ENCODE measurements at regions of chr6 and their contacts with region 1.

Region 1: GRCh38 chr6:13026557-13026956 is 301.8 kb downstream of the TBC1D7 start:
- DNase-seq: no peak
- H3K4me3 Mint-ChIP-seq: no peak overlapping the region
- H3K27ac Mint-ChIP-seq: no peak overlapping the region
- H3K4me1 Mint-ChIP-seq: no peaks in the 10 kb centered on the region
- H3K27me3 Mint-ChIP-seq: peaks cover 7% of the 10 kb centered on the region

Region 2: GRCh38 chr6:13009461-13009860 is 17.1 kb before region 1 on chr6:
- CTCF ChIA-PET with region 1: no interaction called
- POLR2A ChIA-PET with region 1: no interaction called
- intact Hi-C with region 1: loop called (anchors 2 kb)
- DNase-seq: no peak
- H3K4me3 Mint-ChIP-seq: no peak overlapping the region
- H3K27ac Mint-ChIP-seq: no peak overlapping the region
- H3K4me1 Mint-ChIP-seq: peaks cover 7% of the 10 kb centered on the region
- H3K27me3 Mint-ChIP-seq: peaks cover 39% of the 10 kb centered on the region

Region 3: GRCh38 chr6:13044373-13045239 is 18.0 kb after region 1 on chr6:
- CTCF ChIA-PET with region 1: no interaction called
- POLR2A ChIA-PET with region 1: no interaction called
- intact Hi-C with region 1: no loop called
- DNase-seq: no peak
- H3K4me3 Mint-ChIP-seq: no peak overlapping the region
- H3K27ac Mint-ChIP-seq: no peak overlapping the region
- H3K4me1 Mint-ChIP-seq: no peaks in the 10 kb centered on the region
- H3K27me3 Mint-ChIP-seq: peaks cover 5% of the 10 kb centered on the region